Natural killer cell (primary cell): ENCODE measurements at regions of chrX and their contacts with region 1.

Region 1: DNA sequence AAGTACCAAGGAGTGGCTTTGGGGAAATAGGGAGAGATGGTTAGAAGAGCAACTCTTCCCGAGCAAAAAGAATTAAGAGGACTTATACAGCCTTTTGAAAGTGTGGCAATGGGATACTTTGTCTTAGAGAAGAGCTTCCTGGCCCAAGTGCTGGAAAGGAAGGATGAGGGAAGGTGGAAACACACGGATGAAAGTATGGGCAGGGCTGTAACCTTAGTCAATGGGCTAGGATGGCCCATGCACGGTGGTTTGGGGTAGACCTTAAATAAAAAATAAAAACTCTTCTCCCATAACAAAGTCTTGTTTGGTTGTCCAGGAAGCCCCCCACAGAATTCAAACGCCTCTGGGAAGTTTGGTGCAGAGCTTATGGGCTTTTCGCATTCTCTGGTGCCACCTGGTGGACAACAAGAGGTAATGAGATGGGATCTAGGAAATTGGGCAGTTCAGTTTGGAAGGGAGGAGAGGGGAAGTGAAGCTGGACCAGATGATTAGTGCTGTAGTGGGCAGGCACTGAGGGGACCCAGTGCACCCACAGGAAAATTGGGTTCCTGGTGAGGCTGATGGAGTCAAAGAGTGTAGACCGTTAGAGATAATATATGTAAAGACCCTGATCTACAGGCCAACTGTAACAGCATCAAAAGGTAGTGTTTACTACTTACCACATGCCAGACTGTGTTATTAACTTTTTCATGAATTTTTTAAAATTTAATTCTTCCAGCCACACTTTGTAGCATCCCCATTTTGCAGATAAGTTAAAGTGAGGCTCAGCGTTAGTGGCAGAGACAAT is 13.8 kb upstream of the ENOX2 start:
- DNase-seq: peak; percentile 15 to 78
- ATAC-seq: peak in 2 of 3 donors; percentile 52 to 84
- H3K4me3 ChIP-seq: no peak overlapping the region
- H3K4me3 Mint-ChIP-seq: no peak overlapping the region
- H3K27ac ChIP-seq: no peak overlapping the region
- H3K27ac Mint-ChIP-seq: no peak overlapping the region
- H3K4me1 ChIP-seq: no peaks in the 10 kb centered on the region
- H3K4me1 Mint-ChIP-seq: no peaks in the 10 kb centered on the region
- H3K27me3 ChIP-seq: no peaks in the 10 kb centered on the region
- H3K27me3 Mint-ChIP-seq: peaks cover 0 to 51% of the 10 kb centered on the region in 2 donors
- CTCF ChIP-seq: peak; percentile 66

Region 2: DNA sequence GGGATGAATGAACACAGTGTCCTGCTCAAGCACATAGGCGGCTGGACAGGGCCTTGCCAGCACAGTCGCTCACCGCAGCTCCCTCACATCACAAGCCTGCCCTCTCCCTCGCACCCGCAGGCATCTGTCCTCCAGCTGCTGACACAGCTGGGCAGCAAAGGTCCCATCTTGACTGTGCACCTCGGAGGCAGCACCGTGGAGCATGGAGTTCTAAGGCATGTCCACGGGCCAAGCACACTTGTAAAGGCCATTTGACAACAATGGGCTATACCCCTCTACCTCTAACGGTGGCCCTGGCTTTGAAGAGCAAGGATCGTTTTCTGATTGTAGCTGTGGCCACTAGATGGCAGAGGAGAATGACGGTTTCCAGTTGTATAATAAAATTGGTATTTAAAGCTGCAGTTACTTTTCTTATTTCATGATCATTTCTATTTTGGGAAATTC is 1315.8 kb before region 1 on chrX:
- intact Hi-C with region 1: loop called (anchors 5 kb)
- DNase-seq: peak in 1 of 2 donors; percentile 59
- ATAC-seq: peak in 2 of 3 donors; percentile 52 to 57
- H3K4me3 ChIP-seq: no peak overlapping the region
- H3K4me3 Mint-ChIP-seq: no peak overlapping the region
- H3K27ac ChIP-seq: no peak overlapping the region
- H3K27ac Mint-ChIP-seq: no peak overlapping the region
- H3K4me1 ChIP-seq: peaks cover 21% of the 10 kb centered on the region
- H3K4me1 Mint-ChIP-seq: peaks cover 6 to 23% of the 10 kb centered on the region in 2 donors
- H3K27me3 ChIP-seq: no peaks in the 10 kb centered on the region
- H3K27me3 Mint-ChIP-seq: peaks cover 5 to 8% of the 10 kb centered on the region in 2 donors
- CTCF ChIP-seq: peak; percentile 35

Region 3: DNA sequence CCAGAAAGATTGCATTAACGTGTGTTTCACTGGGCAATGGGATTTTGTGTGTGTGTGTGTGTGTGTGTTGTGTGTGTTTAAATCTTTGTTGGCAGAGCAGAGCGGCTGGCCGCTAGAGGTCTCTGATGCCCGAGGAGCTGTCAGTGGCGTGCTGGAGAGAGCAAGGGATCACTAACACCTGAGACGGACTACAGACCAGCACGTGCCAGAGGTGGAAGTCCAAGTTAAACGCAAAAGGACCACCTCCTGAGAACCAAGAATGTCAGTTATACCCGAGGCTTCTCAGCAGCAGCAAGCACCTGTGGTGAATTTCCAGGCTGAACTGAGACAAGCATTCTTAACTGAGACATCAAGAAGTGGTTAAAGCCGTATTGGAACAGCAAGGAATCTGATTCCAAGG is 586.1 kb before region 1 on chrX:
- intact Hi-C with region 1: loop called (anchors 2 kb)
- DNase-seq: peak in 1 of 2 donors; percentile 52
- ATAC-seq: peak in 1 of 3 donors; percentile 46
- H3K4me3 ChIP-seq: no peak overlapping the region
- H3K4me3 Mint-ChIP-seq: no peak overlapping the region
- H3K27ac ChIP-seq: no peak overlapping the region
- H3K27ac Mint-ChIP-seq: no peak overlapping the region
- H3K4me1 ChIP-seq: no peaks in the 10 kb centered on the region
- H3K4me1 Mint-ChIP-seq: no peaks in the 10 kb centered on the region
- H3K27me3 ChIP-seq: no peaks in the 10 kb centered on the region
- H3K27me3 Mint-ChIP-seq: peaks cover 24 to 51% of the 10 kb centered on the region in 2 donors
- CTCF ChIP-seq: no peak

Region 4: DNA sequence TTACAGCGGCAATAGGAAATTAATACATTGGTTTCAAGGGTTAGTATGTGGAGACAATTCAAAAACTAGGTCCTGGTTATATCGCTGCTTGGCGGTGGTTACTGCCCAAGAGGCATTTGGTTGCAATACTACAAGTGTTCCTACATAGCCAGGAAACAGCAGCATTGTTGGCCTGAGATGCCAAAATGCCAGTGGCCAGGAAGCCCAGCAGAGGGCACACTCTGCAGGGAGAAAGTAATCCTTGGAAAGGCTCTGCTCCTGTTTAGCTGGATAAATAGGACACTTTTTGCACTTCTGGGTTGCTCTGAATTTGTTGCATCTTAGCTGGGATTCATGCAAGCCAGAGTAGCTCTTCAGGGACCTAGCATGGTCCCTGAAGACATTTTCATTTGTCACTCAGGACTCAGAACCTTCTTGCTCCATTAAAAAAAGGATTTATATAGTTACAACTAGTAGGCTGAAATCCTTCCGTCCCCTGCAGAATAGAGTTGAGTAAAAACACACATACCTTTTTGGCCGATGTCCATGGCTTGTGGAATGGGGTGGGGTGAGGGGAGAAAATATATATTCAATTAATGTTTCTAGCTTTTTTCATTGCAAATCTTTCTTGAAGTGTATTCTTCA is 523.3 kb before region 1 on chrX:
- intact Hi-C with region 1: loop called (anchors 5 kb)
- DNase-seq: peak in 1 of 2 donors; percentile 5
- ATAC-seq: no peak
- H3K4me3 ChIP-seq: no peak overlapping the region
- H3K4me3 Mint-ChIP-seq: no peak overlapping the region
- H3K27ac ChIP-seq: no peak overlapping the region
- H3K27ac Mint-ChIP-seq: no peak overlapping the region
- H3K4me1 ChIP-seq: no peaks in the 10 kb centered on the region
- H3K4me1 Mint-ChIP-seq: no peaks in the 10 kb centered on the region
- H3K27me3 ChIP-seq: peaks cover 5% of the 10 kb centered on the region
- H3K27me3 Mint-ChIP-seq: peaks cover 17 to 56% of the 10 kb centered on the region in 2 donors
- CTCF ChIP-seq: no peak

Region 5: DNA sequence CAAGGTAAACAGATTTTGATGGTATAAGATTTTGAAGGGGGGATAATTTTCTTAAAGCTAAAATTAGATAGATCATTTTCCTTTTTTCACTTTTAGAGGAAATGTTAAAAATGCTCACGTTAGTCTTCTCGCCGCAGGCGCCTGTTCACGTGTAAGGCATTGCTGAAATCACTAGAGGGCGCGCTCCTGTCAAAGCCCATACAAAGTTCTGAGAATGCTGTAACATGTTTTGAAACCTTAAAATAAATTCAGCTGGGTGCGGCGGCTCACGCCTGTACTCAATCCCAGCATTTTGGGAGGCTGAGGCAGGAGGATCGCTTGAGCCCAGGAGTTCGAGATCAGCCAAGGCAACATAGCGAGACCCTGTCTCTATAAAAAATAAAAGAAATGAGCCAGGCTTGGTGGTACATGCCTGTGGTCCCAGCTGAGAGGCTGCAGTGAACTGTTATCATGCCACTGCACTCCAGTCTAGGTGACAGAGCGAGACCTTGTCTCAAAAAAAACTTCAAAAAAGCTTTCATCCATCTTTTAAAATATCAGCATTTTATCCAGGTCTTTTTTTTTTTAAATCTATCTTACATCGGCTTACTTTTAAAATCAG is 377.0 kb before region 1 on chrX:
- intact Hi-C with region 1: loop called (anchors 1 kb)
- DNase-seq: peak in 1 of 2 donors; percentile 52
- ATAC-seq: peak in 1 of 3 donors; percentile 63
- H3K4me3 ChIP-seq: no peak overlapping the region
- H3K4me3 Mint-ChIP-seq: no peak overlapping the region
- H3K27ac ChIP-seq: no peak overlapping the region
- H3K27ac Mint-ChIP-seq: no peak overlapping the region
- H3K4me1 ChIP-seq: no peaks in the 10 kb centered on the region
- H3K4me1 Mint-ChIP-seq: no peaks in the 10 kb centered on the region
- H3K27me3 ChIP-seq: no peaks in the 10 kb centered on the region
- H3K27me3 Mint-ChIP-seq: peaks cover 13 to 25% of the 10 kb centered on the region in 2 donors
- CTCF ChIP-seq: peak; percentile 56

Region 6: DNA sequence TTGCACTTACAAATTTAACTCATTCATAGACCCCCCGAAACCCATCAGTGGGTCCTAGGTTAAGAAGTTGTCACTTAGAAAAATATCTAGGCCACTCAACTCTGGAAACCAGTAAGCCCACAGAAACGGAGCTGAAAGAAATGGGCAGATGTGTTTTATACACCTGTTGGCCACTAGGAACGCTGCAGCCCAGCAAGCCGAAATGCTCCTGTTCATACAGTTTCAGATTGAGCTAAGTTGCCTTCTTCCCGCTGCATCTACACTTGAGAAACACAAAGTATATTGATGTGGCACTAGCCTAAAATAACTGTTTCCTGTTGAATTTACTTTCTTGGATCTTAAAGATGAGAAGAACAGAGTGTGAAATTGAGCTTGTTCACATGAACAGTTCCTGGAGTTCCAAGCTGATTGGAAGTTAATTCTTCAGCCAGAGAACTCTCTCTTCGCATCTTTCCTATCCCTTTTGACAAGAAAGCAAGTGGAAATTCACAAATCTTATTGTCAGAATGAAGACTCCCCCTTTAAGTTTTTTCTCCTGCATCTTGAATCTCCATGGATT is 340.9 kb before region 1 on chrX:
- intact Hi-C with region 1: loop called (anchors 2 kb)
- DNase-seq: peak in 1 of 2 donors; percentile 35
- ATAC-seq: peak in 1 of 3 donors; percentile 61
- H3K4me3 ChIP-seq: no peak overlapping the region
- H3K4me3 Mint-ChIP-seq: no peak overlapping the region
- H3K27ac ChIP-seq: no peak overlapping the region
- H3K27ac Mint-ChIP-seq: no peak overlapping the region
- H3K4me1 ChIP-seq: no peaks in the 10 kb centered on the region
- H3K4me1 Mint-ChIP-seq: peaks cover 0 to 3% of the 10 kb centered on the region in 2 donors
- H3K27me3 ChIP-seq: no peaks in the 10 kb centered on the region
- H3K27me3 Mint-ChIP-seq: peaks cover 5 to 35% of the 10 kb centered on the region in 2 donors
- CTCF ChIP-seq: peak; percentile 38

Region 7: DNA sequence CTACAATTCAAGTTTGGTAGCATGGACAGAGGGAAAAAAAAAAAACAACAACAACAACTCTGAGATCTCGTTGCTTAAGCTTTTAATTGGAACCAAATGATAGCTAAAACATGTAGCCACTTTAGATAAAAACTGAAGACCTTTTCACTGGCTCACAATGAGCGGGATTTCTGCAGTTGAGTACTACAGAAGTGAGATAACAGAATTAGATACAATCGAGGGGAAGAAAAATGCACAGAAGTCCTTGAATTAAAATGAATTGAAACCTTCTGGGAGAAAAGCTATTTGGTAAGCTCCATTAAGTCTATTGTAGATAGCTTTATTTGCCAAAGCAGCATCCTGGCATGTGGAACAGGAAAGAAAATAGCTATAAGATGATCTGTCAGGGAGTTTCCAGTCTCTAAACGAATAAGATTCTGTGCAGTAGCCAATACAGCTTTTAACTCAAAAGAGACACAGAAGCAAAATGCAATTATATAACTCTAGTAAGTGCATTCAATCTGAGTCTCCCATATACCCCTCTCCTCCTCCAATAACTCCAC is 262.3 kb before region 1 on chrX:
- intact Hi-C with region 1: no loop called
- DNase-seq: no peak
- ATAC-seq: no peak
- H3K4me3 ChIP-seq: no peak overlapping the region
- H3K4me3 Mint-ChIP-seq: no peak overlapping the region
- H3K27ac ChIP-seq: no peak overlapping the region
- H3K27ac Mint-ChIP-seq: no peak overlapping the region
- H3K4me1 ChIP-seq: no peaks in the 10 kb centered on the region
- H3K4me1 Mint-ChIP-seq: no peaks in the 10 kb centered on the region
- H3K27me3 ChIP-seq: no peaks in the 10 kb centered on the region
- H3K27me3 Mint-ChIP-seq: no peaks in the 10 kb centered on the region
- CTCF ChIP-seq: no peak